Esophagus muscularis mucosa (tissue), 4 donors: ENCODE measurements at regions of chr3 and their contacts with region 1.

Region 1: GRCh38 chr3:183252973-183253901 is at the start of gene B3GNT5:
- DNase-seq: no peak
- H3K4me3 ChIP-seq: peak within 1 kb of the TSS; percentile 67 to 88 (median 84)
- H3K27ac ChIP-seq: peak within 1 kb of the TSS; percentile 85 to 92 (median 86)
- H3K4me1 ChIP-seq: peaks cover 0 to 18% (median 13%) of the 10 kb centered on the region in 4 donors
- H3K27me3 ChIP-seq: no peaks in the 10 kb centered on the region
- CTCF ChIP-seq: no peak
- EP300 ChIP-seq: no peak
- POLR2A ChIP-seq: no peak
- total RNA-seq, gene B3GNT5: 2.1 to 11.3 (median 5.2) TPM

Region 2: GRCh38 chr3:183122257-183122932 is 130.8 kb before region 1 on chr3:
- intact Hi-C with region 1: loop called (anchors 10 kb)
- DNase-seq: no peak
- H3K4me3 ChIP-seq: no peak overlapping the region
- H3K27ac ChIP-seq: no peak overlapping the region
- H3K4me1 ChIP-seq: peaks cover 0 to 6% (median 2%) of the 10 kb centered on the region in 4 donors
- H3K27me3 ChIP-seq: peaks cover 0 to 7% (median 0%) of the 10 kb centered on the region in 4 donors
- CTCF ChIP-seq: peak; percentile 82 to 84 (median 83)
- EP300 ChIP-seq: no peak
- POLR2A ChIP-seq: no peak

Region 3: GRCh38 chr3:183291497-183292040 is 38.3 kb after region 1 on chr3:
- intact Hi-C with region 1: loop called (anchors 5 kb)
- DNase-seq: no peak
- H3K4me3 ChIP-seq: no peak overlapping the region
- H3K27ac ChIP-seq: no peak overlapping the region
- H3K4me1 ChIP-seq: peaks cover 0 to 11% (median 11%) of the 10 kb centered on the region in 4 donors
- H3K27me3 ChIP-seq: no peaks in the 10 kb centered on the region
- CTCF ChIP-seq: no peak
- EP300 ChIP-seq: no peak
- POLR2A ChIP-seq: no peak

Region 4: DNA sequence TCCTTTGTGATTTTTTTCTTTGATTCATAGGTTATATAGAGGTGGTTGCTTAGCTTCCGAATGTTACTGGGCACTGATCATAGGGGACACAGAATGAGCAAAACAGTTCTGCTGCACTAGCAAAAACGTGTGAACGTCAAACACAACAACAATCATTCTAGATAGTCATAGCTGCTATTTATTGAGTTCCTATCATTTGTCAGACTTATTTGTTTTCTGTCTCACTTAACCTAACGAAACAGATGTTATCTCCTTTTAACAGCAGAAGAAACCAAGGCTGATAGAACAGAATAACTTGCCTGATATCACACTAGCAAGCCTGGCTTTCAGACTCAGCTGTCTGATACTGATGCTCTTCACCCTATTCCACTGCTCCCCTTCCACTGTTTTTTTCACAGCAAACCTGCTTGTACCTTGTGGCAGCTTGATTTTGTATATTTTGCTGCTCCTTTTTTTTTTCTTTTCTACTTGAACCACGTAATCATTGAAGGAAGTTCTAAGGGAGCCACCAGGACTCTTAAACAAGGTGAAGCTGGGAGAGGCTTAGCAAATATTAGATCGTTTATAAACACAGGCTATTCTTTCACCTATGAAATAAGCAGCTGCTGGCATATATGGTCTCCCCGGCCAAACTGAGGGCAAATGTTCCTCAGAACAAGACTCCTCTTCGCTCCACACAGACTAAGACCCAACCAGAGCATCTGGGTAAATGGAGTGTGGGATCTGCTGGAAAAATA is 96.4 kb after region 1 on chr3:
- intact Hi-C with region 1: no loop called
- DNase-seq: no peak
- H3K4me3 ChIP-seq: no peak overlapping the region
- H3K27ac ChIP-seq: no peak overlapping the region
- H3K4me1 ChIP-seq: no peaks in the 10 kb centered on the region
- H3K27me3 ChIP-seq: no peaks in the 10 kb centered on the region
- CTCF ChIP-seq: no peak
- EP300 ChIP-seq: no peak
- POLR2A ChIP-seq: no peak

Region 5: GRCh38 chr3:183385698-183386613 is 132.7 kb after region 1 on chr3:
- intact Hi-C with region 1: loop called (anchors 5 kb)
- DNase-seq: no peak
- H3K4me3 ChIP-seq: no peak overlapping the region
- H3K27ac ChIP-seq: peak overlapping the region in 1 of 4 donors; percentile 16
- H3K4me1 ChIP-seq: peaks cover 0 to 3% (median 0%) of the 10 kb centered on the region in 4 donors
- H3K27me3 ChIP-seq: no peaks in the 10 kb centered on the region
- CTCF ChIP-seq: peak; percentile 74 to 80 (median 77)
- EP300 ChIP-seq: no peak
- POLR2A ChIP-seq: no peak